Right lobe of liver (tissue), 6 donors: ENCODE measurements at regions of chr3 and their contacts with region 1.

Region 1: DNA sequence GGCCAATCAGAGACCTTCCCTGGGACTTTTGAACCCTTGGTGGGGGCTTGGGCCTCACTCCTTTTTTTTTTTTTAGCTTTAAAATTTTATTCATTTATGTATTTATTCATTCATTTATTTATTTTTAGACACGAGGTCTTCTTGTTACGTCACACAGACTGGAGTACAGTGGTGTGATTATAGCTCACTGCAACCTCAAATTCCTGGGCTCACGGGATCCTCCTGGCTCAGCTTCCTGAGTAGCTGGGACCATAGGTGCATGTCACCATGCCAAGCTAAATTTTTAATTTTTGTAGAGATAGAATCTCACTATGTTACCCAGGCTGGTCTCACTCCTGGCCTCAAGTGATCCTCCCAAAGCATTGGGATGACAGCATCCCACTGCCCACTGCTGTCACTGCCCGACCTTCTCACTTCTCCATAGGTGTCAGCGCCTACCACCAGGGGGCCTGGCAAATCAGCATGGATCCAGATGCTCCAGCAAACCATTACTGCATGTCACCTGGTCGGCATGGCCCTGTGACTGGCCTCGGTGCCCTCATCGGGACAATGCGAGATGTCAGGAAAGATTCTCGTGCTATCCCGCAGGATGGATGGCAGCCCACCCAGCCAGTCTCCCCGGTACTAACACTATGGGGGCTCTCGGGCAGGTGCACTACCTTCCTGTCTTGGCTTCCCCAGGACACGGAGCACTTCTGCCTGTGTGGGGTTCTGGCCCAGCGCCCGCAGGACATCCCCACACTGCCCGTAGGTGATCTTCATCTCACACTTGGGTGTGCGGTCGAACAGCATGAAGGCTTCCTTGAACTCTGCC is 3.0 kb downstream of the MYL3 start:
- DNase-seq: peak; percentile 39 to 53 (median 46)
- ATAC-seq: peak in 1 of 4 donors; percentile 34
- H3K4me3 ChIP-seq: no peak overlapping the region
- H3K27ac ChIP-seq: no peak overlapping the region
- H3K4me1 ChIP-seq: no peaks in the 10 kb centered on the region
- H3K27me3 ChIP-seq: no peaks in the 10 kb centered on the region
- CTCF ChIP-seq: peak in 3 of 4 donors; percentile 13 to 31 (median 25)
- POLR2A ChIP-seq: no peak

Region 2: GRCh38 chr3:46484911-46485778 is 375.1 kb before region 1 on chr3:
- intact Hi-C with region 1: no loop called
- DNase-seq: peak in 1 of 3 donors; percentile 30
- ATAC-seq: no peak
- H3K4me3 ChIP-seq: no peak overlapping the region
- H3K27ac ChIP-seq: no peak overlapping the region
- H3K4me1 ChIP-seq: peaks cover 0 to 11% (median 7%) of the 10 kb centered on the region in 4 donors
- H3K27me3 ChIP-seq: no peaks in the 10 kb centered on the region
- CTCF ChIP-seq: no peak
- POLR2A ChIP-seq: no peak

Region 3: DNA sequence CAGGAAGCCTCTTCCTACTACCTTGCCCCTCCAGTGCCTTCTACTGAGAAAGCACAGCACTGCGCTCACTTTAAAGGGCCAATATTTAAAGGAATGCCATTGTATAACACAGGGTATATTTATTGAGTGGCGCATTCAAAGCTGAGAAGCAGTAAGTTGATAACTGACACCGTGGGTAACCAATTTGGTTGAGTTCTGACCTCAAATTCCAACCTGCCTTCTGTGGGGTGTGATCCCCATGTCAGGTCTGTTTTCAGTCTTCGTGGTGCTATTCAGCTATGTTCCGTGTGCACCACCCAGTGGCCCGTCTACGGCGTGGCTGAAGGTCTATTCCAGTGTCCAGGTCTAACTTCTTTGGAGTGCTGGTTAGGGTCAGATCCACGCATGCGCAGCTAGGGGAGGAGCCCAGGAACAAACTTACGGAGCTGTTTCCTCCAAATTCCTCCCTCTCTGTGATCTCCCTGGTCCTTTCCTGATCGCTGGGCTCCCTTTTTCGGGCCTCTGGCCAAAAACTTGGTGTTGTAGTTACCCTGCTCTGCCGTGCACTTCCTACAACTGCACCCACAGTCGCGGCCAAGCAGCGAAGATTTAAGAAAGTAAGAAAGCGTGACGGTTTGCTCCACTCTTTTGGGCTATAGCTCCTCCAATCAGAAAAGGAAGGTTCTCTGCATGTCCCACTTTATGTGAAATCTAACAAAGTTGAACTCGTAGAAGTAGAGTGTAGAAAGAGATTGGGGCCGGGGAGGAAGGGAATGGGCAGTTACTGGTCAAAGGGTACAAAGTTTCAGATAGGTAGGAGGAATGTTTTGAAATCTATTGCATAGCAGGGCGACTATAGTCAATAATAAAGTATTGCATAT is 301.8 kb before region 1 on chr3:
- intact Hi-C with region 1: no loop called
- DNase-seq: peak; percentile 94 to 97 (median 94)
- ATAC-seq: peak; percentile 94 to 99 (median 97)
- H3K4me3 ChIP-seq: peak overlapping the region in 2 of 3 donors; percentile 47 to 50
- H3K27ac ChIP-seq: peak overlapping the region; percentile 39 to 77 (median 70)
- H3K4me1 ChIP-seq: peaks cover 0 to 16% (median 2%) of the 10 kb centered on the region in 4 donors
- H3K27me3 ChIP-seq: no peaks in the 10 kb centered on the region
- CTCF ChIP-seq: peak; percentile 79 to 90 (median 88)
- POLR2A ChIP-seq: peak; percentile 36

Region 4: GRCh38 chr3:46895204-46895660 is 35.0 kb after region 1 on chr3:
- intact Hi-C with region 1: loop called (anchors 5 to 10 kb)
- DNase-seq: peak; percentile 77 to 81 (median 79)
- ATAC-seq: peak; percentile 65 to 79 (median 76)
- H3K4me3 ChIP-seq: no peak overlapping the region
- H3K27ac ChIP-seq: no peak overlapping the region
- H3K4me1 ChIP-seq: peaks cover 0 to 6% (median 2%) of the 10 kb centered on the region in 4 donors
- H3K27me3 ChIP-seq: no peaks in the 10 kb centered on the region
- CTCF ChIP-seq: peak; percentile 83 to 88 (median 87)
- POLR2A ChIP-seq: no peak

Region 5: GRCh38 chr3:46923559-46924350 is 63.5 kb after region 1 on chr3:
- intact Hi-C with region 1: no loop called
- DNase-seq: peak in 2 of 3 donors; percentile 54 to 58
- ATAC-seq: peak; percentile 50 to 68 (median 58)
- H3K4me3 ChIP-seq: no peak overlapping the region
- H3K27ac ChIP-seq: no peak overlapping the region
- H3K4me1 ChIP-seq: peaks cover 0 to 31% (median 0%) of the 10 kb centered on the region in 4 donors
- H3K27me3 ChIP-seq: no peaks in the 10 kb centered on the region
- CTCF ChIP-seq: peak; percentile 60 to 66 (median 64)
- POLR2A ChIP-seq: no peak